Natural killer cell (primary cell): ENCODE measurements at regions of chr14 and their contacts with region 1.

Region 1: GRCh38 chr14:67674481-67675169 is at the start of gene VTI1B:
- DNase-seq: peak; percentile 84 to 88
- ATAC-seq: peak; percentile 92 to 97 (median 94)
- H3K4me3 ChIP-seq: peak within 1 kb of the TSS; percentile 80
- H3K4me3 Mint-ChIP-seq: peak within 1 kb of the TSS; percentile 93
- H3K27ac ChIP-seq: peak within 1 kb of the TSS; percentile 97
- H3K27ac Mint-ChIP-seq: peak within 1 kb of the TSS; percentile 85 to 89
- H3K4me1 ChIP-seq: peaks cover 35% of the 10 kb centered on the region
- H3K4me1 Mint-ChIP-seq: peaks cover 30 to 38% of the 10 kb centered on the region in 2 donors
- H3K27me3 ChIP-seq: no peaks in the 10 kb centered on the region
- H3K27me3 Mint-ChIP-seq: no peaks in the 10 kb centered on the region
- CTCF ChIP-seq: no peak
- total RNA-seq, gene VTI1B: 47.5 to 77.1 (median 57.9) TPM

Region 2: DNA sequence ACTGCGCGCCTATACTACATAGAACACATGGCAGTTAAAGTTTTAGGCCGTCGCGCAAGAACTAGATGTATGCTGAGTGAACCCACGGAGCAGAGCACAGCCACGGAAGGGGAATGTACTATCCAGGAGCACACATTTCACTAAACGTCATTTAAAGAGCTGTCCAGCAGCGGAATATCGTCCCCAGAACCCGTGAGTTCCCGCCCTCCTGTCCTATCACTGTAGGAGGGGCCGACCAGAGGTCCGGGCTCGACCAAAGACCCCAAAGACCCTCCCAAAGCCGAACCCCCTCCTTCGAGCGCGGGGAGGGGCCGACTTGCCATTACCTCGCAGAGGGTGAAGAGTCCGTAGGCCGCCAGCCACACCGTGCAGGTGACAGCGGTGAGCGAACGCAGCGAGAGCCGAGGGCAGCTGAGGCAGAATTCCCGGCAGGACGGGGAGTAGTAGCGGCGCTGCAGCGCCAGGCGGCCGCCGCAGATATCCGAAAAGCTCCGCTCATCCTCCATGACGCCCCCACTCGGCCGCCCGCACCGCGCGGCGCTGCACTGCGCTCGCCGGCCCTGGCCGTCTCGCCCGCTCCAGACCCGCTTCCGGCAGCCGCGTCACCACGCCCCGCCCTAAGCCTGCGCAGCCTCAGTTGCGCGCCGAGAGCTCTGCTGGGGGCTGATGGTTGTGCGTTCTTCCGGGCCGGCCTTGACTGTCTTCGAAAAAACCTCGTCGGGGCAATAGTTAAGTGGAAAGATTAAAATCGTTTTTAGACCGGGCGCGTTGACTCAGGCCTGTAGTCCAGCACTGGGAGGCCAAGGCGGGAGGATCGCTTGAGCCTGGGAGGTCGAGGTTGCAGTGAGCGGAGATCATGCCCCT is 74.7 kb before region 1 on chr14 and contains the start of gene PIGH:
- intact Hi-C with region 1: loop called (anchors 1 kb)
- DNase-seq: peak; percentile 96
- ATAC-seq: peak; percentile 96 to 99 (median 98)
- H3K4me3 ChIP-seq: peak within 1 kb of the TSS; percentile 96
- H3K4me3 Mint-ChIP-seq: peak within 1 kb of the TSS; percentile 95
- H3K27ac ChIP-seq: peak within 1 kb of the TSS; percentile 82
- H3K27ac Mint-ChIP-seq: peak within 1 kb of the TSS; percentile 88 to 94
- H3K4me1 ChIP-seq: peaks cover 15% of the 10 kb centered on the region
- H3K4me1 Mint-ChIP-seq: peaks cover 33 to 40% of the 10 kb centered on the region in 2 donors
- H3K27me3 ChIP-seq: no peaks in the 10 kb centered on the region
- H3K27me3 Mint-ChIP-seq: peaks cover 3 to 4% of the 10 kb centered on the region in 2 donors
- CTCF ChIP-seq: peak; percentile 73
- total RNA-seq, gene PIGH: 50.9 to 56.0 (median 54.5) TPM

Region 3: DNA sequence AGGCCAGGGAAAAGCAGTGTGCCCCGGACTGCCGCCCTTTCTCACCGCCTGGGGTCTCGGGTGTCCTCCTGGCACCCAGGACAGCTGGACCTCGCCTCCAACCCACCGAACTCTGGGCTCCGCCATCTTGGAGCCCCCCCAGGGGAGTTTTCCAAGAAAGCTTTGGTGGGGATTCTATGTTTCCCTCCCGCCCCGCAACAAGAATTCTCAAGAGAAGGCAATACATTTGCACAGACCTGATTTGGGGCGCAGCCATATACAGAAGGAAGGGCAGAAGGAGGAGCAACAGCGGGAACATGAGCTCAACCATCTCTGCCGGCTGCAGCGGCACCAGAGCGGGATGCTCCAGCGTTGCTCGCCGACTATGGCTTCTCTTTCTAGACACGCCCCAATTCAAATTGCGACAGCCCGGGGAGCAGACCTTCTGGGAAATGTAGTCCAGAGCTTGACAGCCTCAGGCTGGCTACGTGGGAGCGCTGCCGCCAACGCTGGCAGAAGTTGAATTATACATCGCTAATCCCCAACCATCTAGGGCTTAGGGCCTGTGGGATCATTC is 20.8 kb after region 1 on chr14 and contains the start of gene RDH11:
- intact Hi-C with region 1: loop called (anchors 1 kb)
- DNase-seq: peak; percentile 58 to 92
- ATAC-seq: peak; percentile 91 to 94 (median 92)
- H3K4me3 ChIP-seq: peak within 1 kb of the TSS; percentile 95
- H3K4me3 Mint-ChIP-seq: peak within 1 kb of the TSS; percentile 96
- H3K27ac ChIP-seq: peak within 1 kb of the TSS; percentile 82
- H3K27ac Mint-ChIP-seq: peak within 1 kb of the TSS; percentile 94 to 99
- H3K4me1 ChIP-seq: peaks cover 9% of the 10 kb centered on the region
- H3K4me1 Mint-ChIP-seq: peaks cover 16 to 18% of the 10 kb centered on the region in 2 donors
- H3K27me3 ChIP-seq: no peaks in the 10 kb centered on the region
- H3K27me3 Mint-ChIP-seq: no peaks in the 10 kb centered on the region
- CTCF ChIP-seq: no peak
- total RNA-seq, gene RDH11: 26.5 to 37.4 (median 33.6) TPM